ENCODE measurements at regions of chr12 and their contacts with region 1.

Region 1: DNA sequence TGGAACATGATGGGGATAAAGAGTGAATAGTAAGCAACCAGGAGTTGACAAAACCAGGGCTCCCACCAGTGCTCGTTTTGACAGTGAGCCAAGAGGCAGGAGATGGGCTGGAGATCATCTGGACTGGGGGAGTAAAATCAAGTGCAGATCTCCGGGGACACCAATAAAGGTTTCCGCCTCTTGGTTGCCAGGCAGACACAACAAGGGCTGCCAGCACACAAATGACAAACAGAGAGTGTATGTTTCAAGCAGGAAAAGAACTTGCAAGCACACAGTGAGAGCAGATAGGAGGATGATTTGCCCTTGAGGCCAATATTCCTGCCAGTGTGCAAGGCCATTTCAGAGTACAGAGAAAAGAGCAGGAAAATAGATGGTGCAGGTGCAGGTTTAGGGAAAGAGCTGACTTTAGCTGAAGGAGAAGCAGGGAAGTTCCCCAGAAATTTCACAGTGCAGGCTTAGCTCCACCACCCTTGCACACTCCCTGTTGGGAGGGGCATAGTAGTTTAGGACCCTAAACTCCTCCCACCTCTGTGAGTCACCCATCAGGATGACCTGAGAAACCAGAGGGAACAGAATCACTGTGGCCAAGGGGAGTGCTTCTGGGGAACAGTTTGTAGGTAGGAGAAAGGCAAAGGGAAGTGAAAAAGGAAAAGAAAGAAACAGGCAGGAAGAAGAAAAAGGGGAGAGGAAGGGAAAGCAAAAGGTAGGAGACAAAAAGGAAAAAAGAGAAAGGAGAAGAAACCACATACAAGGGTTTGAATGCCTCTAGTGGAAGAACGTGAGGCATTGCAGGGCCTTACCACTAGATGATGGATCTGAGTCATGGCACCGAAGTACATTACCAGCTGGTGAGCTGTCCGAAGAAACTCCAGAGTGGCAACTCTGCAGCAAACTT is 404.4 kb downstream of the SLC6A15 start:
- DNase-seq: peak; percentile 76
- H3K4me3 Mint-ChIP-seq: peak overlapping the region; percentile 32
- H3K27ac Mint-ChIP-seq: peak overlapping the region; percentile 57
- H3K4me1 Mint-ChIP-seq: peaks cover 22% of the 10 kb centered on the region
- H3K27me3 Mint-ChIP-seq: no peaks in the 10 kb centered on the region
- CTCF ChIP-seq: peak; percentile 45

Region 2: GRCh38 chr12:84619113-84619512 is 110.9 kb after region 1 on chr12:
- CTCF ChIA-PET with region 1: interaction called, 3 read pairs
- POLR2A ChIA-PET with region 1: no interaction called
- intact Hi-C with region 1: loop called (anchors 5 kb)
- DNase-seq: no peak
- H3K4me3 Mint-ChIP-seq: no peak overlapping the region
- H3K27ac Mint-ChIP-seq: no peak overlapping the region
- H3K4me1 Mint-ChIP-seq: no peaks in the 10 kb centered on the region
- H3K27me3 Mint-ChIP-seq: no peaks in the 10 kb centered on the region
- CTCF ChIP-seq: peak; percentile 31

Measured in MCF 10A (cell line).